Activated CD4-positive, alpha-beta memory T cell treated with anti-CD3 and anti-CD28 coated beads for 36 hours (primary cell): ENCODE measurements at regions of chr12 and their contacts with region 1.

Region 1: DNA sequence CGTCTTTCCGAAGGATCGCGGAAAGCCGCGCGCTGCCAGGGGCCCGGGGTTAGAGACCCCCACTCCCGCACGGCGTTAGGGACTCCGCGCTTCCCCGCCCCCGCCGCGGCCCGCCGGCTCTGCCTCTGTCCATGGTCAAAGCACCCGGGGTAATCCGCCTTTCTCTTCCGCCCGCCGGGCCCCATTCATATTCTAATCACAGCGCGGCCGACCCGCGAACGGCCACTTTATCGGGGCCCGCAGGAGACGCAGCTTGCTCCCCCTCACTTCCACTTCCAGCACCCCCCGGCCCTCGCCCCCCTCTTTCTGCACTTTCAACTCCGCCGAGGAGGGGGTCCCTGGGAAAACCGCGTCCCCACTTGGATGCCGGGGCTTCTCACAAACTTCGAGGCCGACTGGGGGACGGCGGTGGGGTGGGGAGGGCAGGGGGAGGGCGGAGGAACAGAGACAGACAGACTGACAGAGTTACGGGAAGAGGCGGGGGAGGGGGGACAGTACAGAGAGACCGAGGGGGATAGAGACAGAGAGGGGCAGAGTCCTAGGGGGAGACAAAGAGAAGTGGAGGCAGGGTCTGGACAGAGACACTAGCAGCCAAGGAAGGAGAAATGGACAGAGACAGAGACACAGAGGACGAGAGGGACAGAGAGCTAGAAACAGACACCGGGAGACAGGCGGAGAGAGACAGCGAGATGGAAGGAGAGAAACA is 1.1 kb upstream of the RFX4 start:
- DNase-seq: no peak
- H3K4me3 Mint-ChIP-seq: no peak overlapping the region
- H3K27ac Mint-ChIP-seq: no peak overlapping the region
- H3K4me1 Mint-ChIP-seq: peaks cover 38% of the 10 kb centered on the region
- H3K27me3 Mint-ChIP-seq: peaks cover 67% of the 10 kb centered on the region

Region 2: GRCh38 chr12:106386813-106387535 is 194.7 kb before region 1 on chr12:
- CTCF ChIA-PET with region 1: interaction called, 3 read pairs
- POLR2A ChIA-PET with region 1: no interaction called
- intact Hi-C with region 1: loop called (anchors 10 kb)
- DNase-seq: no peak
- H3K4me3 Mint-ChIP-seq: no peak overlapping the region
- H3K27ac Mint-ChIP-seq: no peak overlapping the region
- H3K4me1 Mint-ChIP-seq: no peaks in the 10 kb centered on the region
- H3K27me3 Mint-ChIP-seq: no peaks in the 10 kb centered on the region

Region 3: DNA sequence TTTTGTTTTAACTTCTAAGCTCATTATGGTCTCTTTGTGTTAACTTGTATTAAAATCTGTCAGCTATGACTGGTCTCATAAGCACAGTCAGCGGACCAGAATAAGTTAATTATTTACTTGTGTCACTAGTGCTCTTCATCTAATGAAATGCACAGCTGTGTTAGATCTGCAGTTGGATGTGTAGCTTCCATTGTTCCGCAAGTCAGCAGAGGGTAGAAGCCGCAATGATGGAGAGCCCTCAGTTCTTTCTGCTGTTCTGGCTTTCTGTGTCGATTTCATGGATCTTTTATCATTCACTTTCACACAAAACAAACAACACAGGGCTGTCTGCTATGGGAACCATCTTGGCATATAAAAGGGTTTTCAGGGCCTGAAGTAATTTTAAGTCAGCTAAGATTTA is 88.2 kb before region 1 on chr12:
- CTCF ChIA-PET with region 1: no interaction called
- POLR2A ChIA-PET with region 1: no interaction called
- intact Hi-C with region 1: no loop called
- DNase-seq: no peak
- H3K4me3 Mint-ChIP-seq: no peak overlapping the region
- H3K27ac Mint-ChIP-seq: no peak overlapping the region
- H3K4me1 Mint-ChIP-seq: no peaks in the 10 kb centered on the region
- H3K27me3 Mint-ChIP-seq: no peaks in the 10 kb centered on the region

Region 4: GRCh38 chr12:106541201-106541600 is 40.5 kb before region 1 on chr12:
- CTCF ChIA-PET with region 1: no interaction called
- POLR2A ChIA-PET with region 1: no interaction called
- intact Hi-C with region 1: no loop called
- DNase-seq: no peak
- H3K4me3 Mint-ChIP-seq: no peak overlapping the region
- H3K27ac Mint-ChIP-seq: no peak overlapping the region
- H3K4me1 Mint-ChIP-seq: no peaks in the 10 kb centered on the region
- H3K27me3 Mint-ChIP-seq: peaks cover 2% of the 10 kb centered on the region